Stomach (tissue), 19 donors: ENCODE measurements at regions of chr11 and their contacts with region 1.

Region 1: DNA sequence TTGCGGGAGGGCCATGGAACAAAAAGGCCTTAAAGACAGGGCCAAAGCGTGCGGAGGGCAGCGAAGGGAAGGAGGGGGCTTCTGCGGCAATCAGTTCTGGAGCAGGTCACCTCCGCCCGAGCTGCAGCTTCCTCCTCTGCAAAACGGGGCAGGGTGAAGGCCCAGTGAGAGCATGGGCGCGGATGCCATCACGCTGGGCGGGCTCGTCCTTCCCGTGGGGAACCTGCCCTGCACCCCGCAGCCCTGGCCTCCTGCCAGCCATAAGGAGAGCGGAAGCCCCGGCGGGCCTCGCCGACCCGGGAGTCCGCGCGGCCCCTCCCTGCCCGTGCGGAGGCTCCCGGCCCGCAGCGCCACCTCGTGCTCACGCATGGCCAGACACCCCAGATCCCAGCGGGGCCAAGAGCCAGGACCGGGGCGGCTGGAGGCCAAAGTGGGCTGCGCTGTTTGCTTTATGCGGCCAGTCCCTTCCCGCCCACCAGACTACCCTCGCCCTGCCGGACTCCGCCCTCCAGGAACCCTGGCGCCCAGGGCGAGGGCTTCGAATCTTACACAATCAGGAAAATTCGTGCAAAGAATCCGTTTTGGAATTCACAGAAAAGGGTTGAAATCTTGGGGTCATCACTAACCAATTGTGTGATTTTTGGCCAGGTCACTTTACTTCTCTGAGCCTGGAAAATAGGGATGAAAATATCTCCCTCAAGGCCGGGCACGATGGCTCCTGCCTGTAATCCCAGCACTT is 16.1 kb downstream of the TSKU start:
- DNase-seq: peak; percentile 86 to 95
- H3K4me3 ChIP-seq: peak overlapping the region; percentile 29 to 32 (median 30)
- H3K27ac ChIP-seq: peak overlapping the region; percentile 32 to 62 (median 56)
- H3K4me1 ChIP-seq: peaks cover 35 to 77% (median 55%) of the 10 kb centered on the region in 4 donors
- H3K27me3 ChIP-seq: peaks cover 0 to 3% (median 0%) of the 10 kb centered on the region in 3 donors
- CTCF ChIP-seq: peak in 5 of 7 experiments; percentile 87 to 93 (median 91)
- EP300 ChIP-seq: no peak
- POLR2A ChIP-seq: no peak

Region 2: DNA sequence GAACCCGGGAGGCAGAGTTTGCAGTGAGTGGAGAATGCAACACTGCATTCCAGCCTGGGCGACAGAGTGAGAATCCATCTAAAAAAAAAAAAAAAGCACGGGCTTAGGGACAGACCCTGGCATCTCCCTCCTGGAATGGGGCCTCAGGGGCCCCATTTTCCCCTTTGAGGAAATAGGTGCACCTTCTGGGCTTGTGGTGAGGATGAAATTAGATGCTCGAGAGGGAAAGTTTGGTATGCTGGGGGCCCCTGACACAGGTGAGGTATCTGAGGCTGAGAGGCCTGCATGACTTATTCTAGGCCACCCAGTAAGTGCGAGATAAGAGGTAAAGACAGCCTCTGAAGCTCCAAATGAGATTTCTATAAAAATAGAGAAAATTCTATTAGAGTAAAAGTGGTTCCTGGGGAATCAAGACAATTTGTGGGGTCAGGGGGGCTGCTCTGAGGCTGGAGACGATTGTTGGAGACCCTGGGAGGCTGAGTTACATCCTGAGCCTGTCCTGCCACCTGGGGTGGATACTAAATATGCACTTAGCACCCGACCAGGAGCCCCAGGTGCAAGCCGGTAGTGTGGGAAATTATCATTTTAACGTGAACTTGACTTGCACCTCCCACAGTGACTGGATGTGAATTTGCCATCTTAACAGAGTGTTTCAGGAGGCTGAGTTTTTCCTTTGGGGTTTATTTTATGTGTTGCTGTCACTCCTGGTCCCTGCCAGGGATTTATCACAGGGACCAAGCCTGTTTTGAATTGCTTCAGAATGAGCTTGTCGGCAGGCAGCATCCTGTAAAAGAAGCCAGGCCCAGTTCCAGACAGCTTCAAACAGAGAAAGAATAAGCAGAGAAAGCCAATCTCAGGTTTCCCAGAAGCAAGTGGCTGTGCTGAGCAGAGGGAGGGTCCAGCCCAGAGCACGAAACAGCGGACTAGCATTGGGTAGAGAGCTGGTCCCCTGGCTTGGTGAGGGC is 64.5 kb before region 1 on chr11:
- intact Hi-C with region 1: loop called (anchors 5 kb)
- DNase-seq: peak in 1 of 2 donors; percentile 43
- H3K4me3 ChIP-seq: no peak overlapping the region
- H3K27ac ChIP-seq: no peak overlapping the region
- H3K4me1 ChIP-seq: peaks cover 0 to 27% (median 8%) of the 10 kb centered on the region in 4 donors
- H3K27me3 ChIP-seq: no peaks in the 10 kb centered on the region
- CTCF ChIP-seq: no peak
- EP300 ChIP-seq: no peak
- POLR2A ChIP-seq: no peak